B cell (primary cell): ENCODE measurements at regions of chr2 and their contacts with region 1.

Region 1: DNA sequence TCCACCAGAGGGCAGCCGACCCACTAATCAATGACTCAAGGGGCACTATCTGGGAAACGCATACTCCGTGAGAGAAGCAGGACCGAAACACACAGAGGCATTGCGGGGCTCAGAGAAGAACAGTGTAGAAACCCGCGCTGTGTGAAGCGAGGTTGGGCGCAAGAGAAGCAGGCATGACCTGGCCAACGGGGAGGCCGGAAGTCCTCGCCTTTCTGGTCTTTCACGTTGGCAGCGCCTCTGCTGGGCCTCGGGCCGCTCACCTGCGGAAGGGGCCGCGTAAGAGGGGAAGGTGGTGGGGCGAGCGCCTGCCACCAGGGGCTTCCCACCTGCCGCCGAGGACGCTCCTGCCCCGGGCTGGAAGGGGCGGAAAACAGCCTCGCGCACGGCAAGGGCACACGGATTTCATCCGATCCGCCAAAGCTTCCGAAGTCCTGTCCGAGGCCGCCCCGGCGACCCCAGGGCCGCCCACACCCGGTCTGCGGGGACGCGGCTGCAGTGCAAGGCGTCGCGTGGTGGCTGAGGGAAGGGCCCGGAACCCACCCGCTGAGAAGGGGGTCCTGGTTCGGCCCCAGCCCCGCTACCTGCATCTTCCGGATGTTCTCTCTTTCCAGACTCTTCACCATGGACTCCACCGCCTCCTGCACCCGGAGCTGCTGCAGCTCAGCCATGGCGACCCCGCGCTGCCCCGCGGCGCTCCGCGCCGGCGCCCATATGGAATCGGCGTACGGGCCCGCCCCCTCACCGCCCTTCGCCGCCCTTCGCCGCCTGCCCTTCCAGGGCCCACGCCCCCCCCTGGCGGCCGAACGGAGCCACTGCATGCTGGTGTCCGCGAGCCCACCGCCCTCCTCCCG is at the start of gene FAM136A:
- DNase-seq: peak; percentile 91
- ATAC-seq: peak; percentile 93
- H3K4me3 ChIP-seq: peak within 1 kb of the TSS; percentile 61 to 98 (median 71)
- H3K4me3 Mint-ChIP-seq: peak within 1 kb of the TSS; percentile 94
- H3K27ac ChIP-seq: peak within 1 kb of the TSS; percentile 77 to 85
- H3K27ac Mint-ChIP-seq: peak within 1 kb of the TSS; percentile 95
- H3K4me1 ChIP-seq: peaks cover 7 to 14% of the 10 kb centered on the region in 2 donors
- H3K4me1 Mint-ChIP-seq: peaks cover 22% of the 10 kb centered on the region
- H3K27me3 ChIP-seq: no peaks in the 10 kb centered on the region
- H3K27me3 Mint-ChIP-seq: no peaks in the 10 kb centered on the region
- CTCF ChIP-seq: peak; percentile 81
- total RNA-seq, gene FAM136A: 41.6 and 41.7 TPM in 2 replicates

Region 2: DNA sequence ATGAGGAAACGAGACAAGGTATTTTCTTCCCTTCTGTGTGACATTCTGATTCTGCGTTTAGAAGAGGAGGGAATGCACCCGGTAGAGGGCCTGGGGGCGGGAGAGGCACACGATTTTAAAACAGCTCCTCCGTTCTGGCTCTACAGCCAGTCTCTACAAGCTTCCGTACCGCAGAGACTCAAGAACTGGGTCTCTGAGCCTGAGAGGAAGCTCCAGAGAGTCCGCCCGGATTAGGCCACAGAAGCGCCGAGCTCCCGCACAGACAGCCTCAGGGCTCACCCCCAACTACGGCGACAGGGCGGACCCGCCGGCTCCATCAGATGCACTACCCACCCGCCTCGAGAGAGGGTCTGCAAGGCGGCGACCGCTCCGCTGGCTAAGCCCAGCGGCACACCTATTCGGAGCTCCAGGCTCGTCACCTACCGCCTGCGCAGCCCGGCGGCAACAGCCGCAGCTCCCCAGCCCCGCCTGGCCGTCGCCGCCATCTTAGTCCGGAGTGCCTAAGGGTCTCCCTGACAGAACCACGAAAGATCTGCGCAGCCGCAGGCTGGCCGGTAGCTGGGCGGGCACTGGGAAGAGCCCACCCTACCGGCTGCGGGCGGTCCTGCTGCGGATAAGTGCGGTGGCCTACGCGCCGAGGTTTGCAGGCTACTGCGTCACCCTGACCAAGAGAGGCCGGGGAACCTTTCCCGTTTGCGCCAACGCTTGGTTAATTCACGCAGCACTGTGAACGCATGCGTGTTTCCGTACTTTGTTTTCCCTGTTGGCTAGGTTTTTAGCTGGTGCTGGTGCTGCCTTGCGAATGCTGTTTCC is 864.4 kb before region 1 on chr2 and contains the start of gene NFU1:
- CTCF ChIA-PET with region 1: no interaction called
- POLR2A ChIA-PET with region 1: no interaction called
- intact Hi-C with region 1: loop called (anchors 5 kb)
- DNase-seq: peak; percentile 94
- ATAC-seq: peak; percentile 94
- H3K4me3 ChIP-seq: peak within 1 kb of the TSS; percentile 67 to 92 (median 78)
- H3K4me3 Mint-ChIP-seq: peak within 1 kb of the TSS; percentile 97
- H3K27ac ChIP-seq: peak within 1 kb of the TSS; percentile 91 to 93
- H3K27ac Mint-ChIP-seq: peak within 1 kb of the TSS; percentile 99
- H3K4me1 ChIP-seq: peaks cover 27 to 33% of the 10 kb centered on the region in 2 donors
- H3K4me1 Mint-ChIP-seq: peaks cover 41% of the 10 kb centered on the region
- H3K27me3 ChIP-seq: no peaks in the 10 kb centered on the region
- H3K27me3 Mint-ChIP-seq: no peaks in the 10 kb centered on the region
- CTCF ChIP-seq: peak; percentile 74
- total RNA-seq, gene NFU1: 33.8 and 40.6 TPM in 2 replicates

Region 3: GRCh38 chr2:69798909-69799526 is 502.6 kb before region 1 on chr2:
- CTCF ChIA-PET with region 1: no interaction called
- POLR2A ChIA-PET with region 1: no interaction called
- intact Hi-C with region 1: no loop called
- DNase-seq: peak; percentile 35
- ATAC-seq: peak; percentile 46
- H3K4me3 ChIP-seq: peak overlapping the region in 4 of 5 experiments; percentile 11 to 42 (median 38)
- H3K4me3 Mint-ChIP-seq: peak overlapping the region; percentile 88
- H3K27ac ChIP-seq: peak overlapping the region; percentile 42 to 71
- H3K27ac Mint-ChIP-seq: peak overlapping the region; percentile 81
- H3K4me1 ChIP-seq: peaks cover 58 to 70% of the 10 kb centered on the region in 2 donors
- H3K4me1 Mint-ChIP-seq: peaks cover 60% of the 10 kb centered on the region
- H3K27me3 ChIP-seq: no peaks in the 10 kb centered on the region
- H3K27me3 Mint-ChIP-seq: no peaks in the 10 kb centered on the region
- CTCF ChIP-seq: no peak

Region 4: GRCh38 chr2:69829256-69830046 is 472.1 kb before region 1 on chr2 and contains the start of gene GMCL1:
- CTCF ChIA-PET with region 1: no interaction called
- POLR2A ChIA-PET with region 1: no interaction called
- intact Hi-C with region 1: loop called (anchors 1 kb)
- DNase-seq: peak; percentile 99
- ATAC-seq: peak; percentile 96
- H3K4me3 ChIP-seq: peak within 1 kb of the TSS; percentile 46 to 97 (median 72)
- H3K4me3 Mint-ChIP-seq: peak within 1 kb of the TSS; percentile 99
- H3K27ac ChIP-seq: peak within 1 kb of the TSS; percentile 94 to 98
- H3K27ac Mint-ChIP-seq: peak within 1 kb of the TSS; percentile 99
- H3K4me1 ChIP-seq: peaks cover 24 to 26% of the 10 kb centered on the region in 2 donors
- H3K4me1 Mint-ChIP-seq: peaks cover 38% of the 10 kb centered on the region
- H3K27me3 ChIP-seq: no peaks in the 10 kb centered on the region
- H3K27me3 Mint-ChIP-seq: no peaks in the 10 kb centered on the region
- CTCF ChIP-seq: no peak
- total RNA-seq, gene GMCL1: 22.0 and 26.3 TPM in 2 replicates

Region 5: GRCh38 chr2:69888451-69888850 is 413.1 kb before region 1 on chr2:
- CTCF ChIA-PET with region 1: no interaction called
- POLR2A ChIA-PET with region 1: no interaction called
- intact Hi-C with region 1: no loop called
- DNase-seq: no peak
- ATAC-seq: no peak
- H3K4me3 ChIP-seq: no peak overlapping the region
- H3K4me3 Mint-ChIP-seq: no peak overlapping the region
- H3K27ac ChIP-seq: no peak overlapping the region
- H3K27ac Mint-ChIP-seq: no peak overlapping the region
- H3K4me1 ChIP-seq: peaks cover 0 to 3% of the 10 kb centered on the region in 2 donors
- H3K4me1 Mint-ChIP-seq: peaks cover 7% of the 10 kb centered on the region
- H3K27me3 ChIP-seq: no peaks in the 10 kb centered on the region
- H3K27me3 Mint-ChIP-seq: no peaks in the 10 kb centered on the region
- CTCF ChIP-seq: no peak

Region 6: GRCh38 chr2:70094978-70095719 is 206.4 kb before region 1 on chr2:
- CTCF ChIA-PET with region 1: no interaction called
- POLR2A ChIA-PET with region 1: no interaction called
- intact Hi-C with region 1: no loop called
- DNase-seq: peak; percentile 90
- ATAC-seq: peak; percentile 94
- H3K4me3 ChIP-seq: peak overlapping the region; percentile 29 to 68 (median 57)
- H3K4me3 Mint-ChIP-seq: peak overlapping the region; percentile 86
- H3K27ac ChIP-seq: peak overlapping the region; percentile 83 to 87
- H3K27ac Mint-ChIP-seq: peak overlapping the region; percentile 98
- H3K4me1 ChIP-seq: peaks cover 43 to 59% of the 10 kb centered on the region in 2 donors
- H3K4me1 Mint-ChIP-seq: peaks cover 46% of the 10 kb centered on the region
- H3K27me3 ChIP-seq: no peaks in the 10 kb centered on the region
- H3K27me3 Mint-ChIP-seq: no peaks in the 10 kb centered on the region
- CTCF ChIP-seq: no peak

Region 7: GRCh38 chr2:70190418-70191243 is 110.9 kb before region 1 on chr2 and contains the start of gene C2orf42:
- CTCF ChIA-PET with region 1: interaction called, 5 read pairs
- POLR2A ChIA-PET with region 1: interaction called, 4 read pairs
- intact Hi-C with region 1: loop called (anchors 1 kb)
- DNase-seq: peak; percentile 99
- ATAC-seq: peak; percentile 87
- H3K4me3 ChIP-seq: peak within 1 kb of the TSS; percentile 72 to 98 (median 80)
- H3K4me3 Mint-ChIP-seq: peak within 1 kb of the TSS; percentile 88
- H3K27ac ChIP-seq: peak within 1 kb of the TSS; percentile 98 to 99
- H3K27ac Mint-ChIP-seq: peak within 1 kb of the TSS; percentile 98
- H3K4me1 ChIP-seq: peaks cover 9 to 11% of the 10 kb centered on the region in 2 donors
- H3K4me1 Mint-ChIP-seq: peaks cover 18% of the 10 kb centered on the region
- H3K27me3 ChIP-seq: no peaks in the 10 kb centered on the region
- H3K27me3 Mint-ChIP-seq: no peaks in the 10 kb centered on the region
- CTCF ChIP-seq: no peak
- total RNA-seq, gene C2orf42: 42.9 and 45.2 TPM in 2 replicates

Region 8: DNA sequence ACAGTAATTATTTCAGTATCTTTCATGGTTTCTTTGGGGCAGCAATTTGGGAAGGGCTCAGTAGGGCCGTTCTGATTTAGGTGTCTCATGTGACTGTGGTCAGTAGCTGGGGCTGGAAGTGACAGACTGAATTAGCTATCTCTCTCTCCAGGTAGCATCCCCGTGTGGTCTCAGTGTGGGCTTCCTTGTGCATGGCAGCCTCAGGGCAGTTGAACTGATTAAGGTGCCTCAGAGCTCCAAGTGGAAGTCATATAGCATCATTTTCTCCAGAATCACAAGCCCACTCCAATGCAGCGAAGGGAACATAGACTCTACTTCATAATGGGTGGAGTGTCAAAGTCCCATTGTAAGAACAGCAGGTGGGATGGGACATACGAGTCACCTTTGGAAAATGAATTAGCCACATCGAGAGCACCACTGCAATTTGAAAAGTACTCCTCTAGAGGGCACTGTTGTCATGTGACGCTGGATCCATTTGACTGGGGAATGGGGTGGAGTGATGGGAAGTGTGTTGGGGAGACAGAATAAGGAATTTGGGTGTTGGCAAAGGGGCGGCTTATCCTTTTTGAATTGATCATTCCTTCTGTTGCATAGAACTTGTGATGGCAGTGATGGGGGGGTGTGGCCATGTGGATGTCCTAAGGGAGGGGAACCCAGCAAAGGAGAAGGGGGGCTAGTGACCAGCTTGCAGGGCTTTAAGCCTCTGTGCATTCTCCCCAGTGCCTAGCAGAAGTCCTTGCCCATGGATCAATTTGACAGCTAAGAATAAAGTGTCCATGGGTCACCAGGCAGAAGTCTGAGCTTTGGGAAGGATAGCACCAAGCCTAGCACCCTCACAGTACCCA is 39.6 kb after region 1 on chr2:
- CTCF ChIA-PET with region 1: interaction called, 13 read pairs
- POLR2A ChIA-PET with region 1: no interaction called
- intact Hi-C with region 1: no loop called
- DNase-seq: peak; percentile 56
- ATAC-seq: no peak
- H3K4me3 ChIP-seq: no peak overlapping the region
- H3K4me3 Mint-ChIP-seq: no peak overlapping the region
- H3K27ac ChIP-seq: no peak overlapping the region
- H3K27ac Mint-ChIP-seq: no peak overlapping the region
- H3K4me1 ChIP-seq: peaks cover 0 to 4% of the 10 kb centered on the region in 2 donors
- H3K4me1 Mint-ChIP-seq: no peaks in the 10 kb centered on the region
- H3K27me3 ChIP-seq: peaks cover 0 to 21% (median 1%) of the 10 kb centered on the region in 4 experiments
- H3K27me3 Mint-ChIP-seq: peaks cover 33% of the 10 kb centered on the region
- CTCF ChIP-seq: peak; percentile 78

Region 9: DNA sequence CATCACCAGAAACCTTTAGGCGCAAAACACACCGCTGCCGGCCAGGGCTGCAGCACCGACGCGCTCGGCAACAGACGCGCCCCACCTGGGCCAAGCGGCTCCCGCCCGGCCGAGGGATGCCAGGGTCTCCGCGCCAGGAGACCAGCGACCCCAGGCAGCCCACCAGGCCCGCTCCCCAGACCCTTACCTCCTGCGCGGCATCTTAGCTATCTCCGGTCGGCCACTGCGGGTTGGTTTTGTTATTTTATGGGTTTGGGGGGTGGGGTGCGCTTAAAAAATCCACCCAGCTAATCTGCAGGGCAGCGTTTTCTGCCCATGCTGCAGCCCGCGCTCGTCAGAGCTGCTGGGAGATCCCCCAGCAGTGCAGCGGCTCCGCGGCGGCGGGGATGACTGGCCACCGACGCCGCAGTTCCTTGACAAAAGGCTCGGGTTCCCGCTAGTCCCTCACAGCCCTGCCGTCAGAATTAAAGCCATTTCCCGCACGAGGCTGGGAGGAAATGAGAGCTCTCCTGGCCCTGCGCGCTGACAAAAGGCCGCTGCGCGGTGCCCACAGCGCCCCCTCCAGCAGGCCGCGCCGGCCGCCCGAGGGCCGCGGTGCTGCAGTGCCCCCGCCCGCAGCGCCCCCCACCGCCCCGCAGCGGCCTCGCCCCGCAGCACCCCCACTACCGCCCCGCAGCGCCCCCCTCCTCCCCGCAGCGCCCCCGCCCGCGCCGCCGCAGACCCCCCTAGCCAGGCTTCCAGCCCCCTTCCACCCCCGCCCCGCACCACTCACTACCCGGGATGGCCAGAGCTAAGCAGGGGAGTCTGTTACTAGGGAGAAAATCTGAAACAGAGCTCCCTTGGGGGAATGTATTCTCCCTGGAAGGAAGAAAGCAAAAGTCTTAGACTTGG is 466.4 kb after region 1 on chr2 and contains the start of gene ADD2:
- CTCF ChIA-PET with region 1: interaction called, 5 read pairs
- POLR2A ChIA-PET with region 1: no interaction called
- intact Hi-C with region 1: loop called (anchors 5 kb)
- DNase-seq: peak; percentile 84
- ATAC-seq: peak; percentile 61
- H3K4me3 ChIP-seq: peak within 1 kb of the TSS; percentile 50 to 78 (median 76)
- H3K4me3 Mint-ChIP-seq: peak within 1 kb of the TSS; percentile 92
- H3K27ac ChIP-seq: peak within 1 kb of the TSS; percentile 58 to 73
- H3K27ac Mint-ChIP-seq: peak within 1 kb of the TSS; percentile 89
- H3K4me1 ChIP-seq: peaks cover 9 to 13% of the 10 kb centered on the region in 2 donors
- H3K4me1 Mint-ChIP-seq: peaks cover 29% of the 10 kb centered on the region
- H3K27me3 ChIP-seq: peaks cover 0 to 24% (median 11%) of the 10 kb centered on the region in 4 experiments
- H3K27me3 Mint-ChIP-seq: peaks cover 21% of the 10 kb centered on the region
- CTCF ChIP-seq: peak; percentile 53
- total RNA-seq, gene ADD2: 21.7 and 22.3 TPM in 2 replicates